T-cell (primary cell): ENCODE measurements at regions of chr9 and their contacts with region 1.

Region 1: DNA sequence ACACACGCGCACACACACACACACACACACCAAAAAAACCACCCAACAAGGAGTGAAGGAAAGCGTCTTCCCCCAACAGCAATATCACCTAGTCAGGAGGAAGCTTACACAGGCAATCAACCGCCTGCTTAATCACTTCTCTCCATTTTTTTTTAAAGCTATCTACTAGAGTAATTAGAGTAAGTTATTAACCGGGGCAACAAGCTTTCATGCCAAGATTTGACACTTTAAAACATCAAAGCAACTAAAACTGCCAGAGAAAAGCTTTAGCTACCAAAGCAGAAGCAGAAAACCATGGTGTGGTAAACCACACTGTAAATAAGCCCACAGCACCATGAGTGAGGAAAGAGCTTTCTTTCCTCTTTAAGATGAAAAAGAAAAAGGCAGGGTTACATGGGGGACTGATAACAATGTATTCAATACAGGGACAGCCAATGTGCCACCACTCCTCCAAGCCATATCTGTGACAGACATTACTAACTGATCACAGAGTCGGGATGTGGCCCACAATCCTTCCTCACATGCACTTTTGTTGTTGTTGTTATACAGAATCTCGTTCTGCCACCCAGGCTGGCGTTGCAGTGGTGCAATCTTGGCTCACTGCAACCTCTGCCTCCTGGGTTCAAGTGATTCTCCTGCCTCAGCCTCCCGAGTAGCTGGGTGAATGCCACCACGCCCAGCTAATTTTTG is 282.1 kb downstream of the CRB2 start:
- DNase-seq: peak in 18 of 35 experiments; percentile 1 to 68 (median 6)
- ATAC-seq: peak; percentile 71 to 89 (median 78)
- H3K4me3 ChIP-seq: peak overlapping the region; percentile 38
- H3K4me3 Mint-ChIP-seq: peak overlapping the region; percentile 67 to 85 (median 78)
- H3K27ac ChIP-seq: peak overlapping the region; percentile 55
- H3K27ac Mint-ChIP-seq: peak overlapping the region; percentile 75 to 88
- H3K4me1 ChIP-seq: peaks cover 17 to 27% of the 10 kb centered on the region in 2 experiments
- H3K4me1 Mint-ChIP-seq: peaks cover 37 to 52% (median 50%) of the 10 kb centered on the region in 3 donors
- H3K27me3 ChIP-seq: no peaks in the 10 kb centered on the region
- H3K27me3 Mint-ChIP-seq: no peaks in the 10 kb centered on the region

Region 2: DNA sequence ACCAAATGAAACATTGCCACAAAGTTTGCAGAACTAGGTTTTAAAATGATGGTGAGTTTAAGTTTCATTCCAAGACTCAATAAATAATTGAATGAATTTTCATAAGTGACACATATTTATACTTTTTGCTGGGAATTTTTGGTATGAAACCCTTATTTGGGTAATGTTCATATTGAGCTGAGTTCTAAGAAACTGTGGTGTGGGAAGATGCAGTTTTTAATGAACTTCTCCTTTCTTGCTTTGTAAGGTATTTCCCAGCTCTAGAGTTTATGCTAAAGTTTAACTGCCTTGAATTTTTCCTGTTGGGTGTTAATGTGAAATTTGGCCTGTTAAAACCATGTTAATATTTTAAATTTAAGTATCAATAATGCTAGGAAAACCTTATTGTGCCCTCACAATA is 682.1 kb before region 1 on chr9:
- CTCF ChIA-PET with region 1: no interaction called
- POLR2A ChIA-PET with region 1: interaction called in 1 of 2 experiments, 12 read pairs
- DNase-seq: no peak
- ATAC-seq: no peak
- H3K4me3 ChIP-seq: no peak overlapping the region
- H3K4me3 Mint-ChIP-seq: no peak overlapping the region
- H3K27ac ChIP-seq: no peak overlapping the region
- H3K27ac Mint-ChIP-seq: no peak overlapping the region
- H3K4me1 ChIP-seq: no peaks in the 10 kb centered on the region
- H3K4me1 Mint-ChIP-seq: peaks cover 14 to 22% (median 20%) of the 10 kb centered on the region in 3 donors
- H3K27me3 ChIP-seq: no peaks in the 10 kb centered on the region
- H3K27me3 Mint-ChIP-seq: no peaks in the 10 kb centered on the region

Region 3: GRCh38 chr9:123453831-123454321 is 184.2 kb before region 1 on chr9:
- CTCF ChIA-PET with region 1: no interaction called
- POLR2A ChIA-PET with region 1: interaction called in 1 of 2 experiments, 13 read pairs
- DNase-seq: no peak
- ATAC-seq: no peak
- H3K4me3 ChIP-seq: no peak overlapping the region
- H3K4me3 Mint-ChIP-seq: no peak overlapping the region
- H3K27ac ChIP-seq: no peak overlapping the region
- H3K27ac Mint-ChIP-seq: no peak overlapping the region
- H3K4me1 ChIP-seq: no peaks in the 10 kb centered on the region
- H3K4me1 Mint-ChIP-seq: no peaks in the 10 kb centered on the region
- H3K27me3 ChIP-seq: no peaks in the 10 kb centered on the region
- H3K27me3 Mint-ChIP-seq: no peaks in the 10 kb centered on the region